IMR-90 (cell line): ENCODE measurements at regions of chr3 and their contacts with region 1.

Region 1: DNA sequence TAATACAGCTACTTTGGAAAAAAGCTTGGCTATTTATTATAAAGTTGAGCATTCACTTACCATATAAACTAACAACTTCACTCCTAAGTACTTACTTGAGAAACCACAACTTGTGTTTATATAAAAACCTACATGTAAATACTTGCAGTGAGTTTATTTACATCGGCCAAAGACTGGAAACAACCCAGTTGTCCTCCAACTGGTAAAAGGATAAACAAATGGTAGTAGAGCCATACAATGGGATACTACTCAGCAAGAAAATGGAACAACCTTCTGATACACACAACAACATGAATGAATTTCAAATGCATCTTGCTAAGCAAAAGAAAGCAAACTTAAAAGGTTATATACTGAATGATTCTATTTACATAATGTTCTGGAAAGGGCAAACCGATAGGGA is 63.7 kb downstream of the SLC7A14 start:
- DNase-seq: peak; percentile 52
- ATAC-seq: peak; percentile 56
- H3K4me3 ChIP-seq: no peak overlapping the region
- H3K27ac ChIP-seq: no peak overlapping the region
- H3K4me1 ChIP-seq: no peaks in the 10 kb centered on the region; the same call in 1 of the 2 replicates
- H3K27me3 ChIP-seq: no peaks in the 10 kb centered on the region
- CTCF ChIP-seq: no peak
- POLR2A ChIP-seq: no peak
- RAD21 ChIP-seq: no peak

Region 2: DNA sequence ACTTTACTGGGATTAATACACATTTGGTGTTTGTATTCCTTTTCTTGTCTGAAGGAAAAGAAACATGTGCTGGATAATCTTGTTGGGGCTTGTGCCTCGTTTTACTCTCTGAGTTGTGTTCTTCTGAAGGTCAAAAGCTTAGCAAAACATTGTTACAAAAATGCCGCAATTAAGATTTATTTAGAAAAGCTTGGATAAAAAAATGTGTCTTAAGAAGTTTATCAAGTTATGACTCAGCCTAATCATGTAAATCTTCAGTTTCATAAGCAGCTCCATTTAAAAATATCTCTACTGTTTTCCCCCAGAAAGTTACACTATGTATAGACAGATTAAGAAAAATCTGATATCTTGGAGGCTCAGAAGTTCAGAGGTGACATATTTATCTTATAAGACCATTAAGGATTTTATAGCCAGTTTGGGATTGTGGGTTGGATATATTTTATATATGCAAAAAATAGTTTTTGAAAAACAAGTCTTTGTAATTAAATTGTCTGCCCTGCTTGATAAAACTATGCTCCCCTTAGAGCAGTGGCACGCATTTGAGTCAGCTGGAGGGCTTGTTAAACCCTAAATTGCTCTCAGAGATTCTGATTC is 47.0 kb before region 1 on chr3:
- CTCF ChIA-PET with region 1: no interaction called
- POLR2A ChIA-PET with region 1: no interaction called
- dilution Hi-C with region 1: no loop called
- in situ Hi-C with region 1: no loop called
- intact Hi-C with region 1: loop called (anchors 1 kb)
- DNase-seq: peak; percentile 62
- ATAC-seq: peak; percentile 35
- H3K4me3 ChIP-seq: no peak overlapping the region
- H3K27ac ChIP-seq: peak overlapping the region; percentile 39; the same call in 1 of the 2 replicates
- H3K4me1 ChIP-seq: peaks cover 22% of the 10 kb centered on the region
- H3K27me3 ChIP-seq: no peaks in the 10 kb centered on the region
- CTCF ChIP-seq: no peak
- POLR2A ChIP-seq: no peak
- RAD21 ChIP-seq: no peak